H1 (cell line): ENCODE measurements at regions of chr1 and their contacts with region 1.

Region 1: DNA sequence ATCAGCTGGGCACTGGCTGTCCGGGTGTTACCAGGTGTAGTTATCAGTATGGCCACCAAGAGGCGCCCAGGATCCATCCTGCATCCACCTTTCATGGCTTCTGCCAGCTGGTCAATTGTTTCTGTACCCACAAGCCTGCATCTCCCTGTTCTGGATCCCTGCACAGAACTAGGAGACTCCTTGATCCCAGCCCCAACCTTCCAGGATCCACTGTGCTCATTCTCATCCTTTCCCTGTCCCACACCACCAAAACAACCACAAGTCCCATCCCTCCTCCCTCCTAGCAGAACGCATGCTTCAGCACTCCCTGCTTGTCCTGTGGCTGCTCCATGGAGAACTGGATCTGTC is 27.2 kb upstream of the FOXE3 start:
- DNase-seq: peak; percentile 46 to 89
- H3K4me3 ChIP-seq: no peak overlapping the region
- H3K27ac ChIP-seq: no peak overlapping the region
- H3K4me1 ChIP-seq: no peaks in the 10 kb centered on the region
- H3K27me3 ChIP-seq: peaks cover 0 to 2% (median 0%) of the 10 kb centered on the region in 4 experiments; a peak in 2 of 7 replicates
- CTCF ChIP-seq: peak; percentile 80 to 93 (median 89)
- EP300 ChIP-seq: no peak
- POLR2A ChIP-seq: no peak
- RAD21 ChIP-seq: peak; percentile 92 to 94

Region 2: DNA sequence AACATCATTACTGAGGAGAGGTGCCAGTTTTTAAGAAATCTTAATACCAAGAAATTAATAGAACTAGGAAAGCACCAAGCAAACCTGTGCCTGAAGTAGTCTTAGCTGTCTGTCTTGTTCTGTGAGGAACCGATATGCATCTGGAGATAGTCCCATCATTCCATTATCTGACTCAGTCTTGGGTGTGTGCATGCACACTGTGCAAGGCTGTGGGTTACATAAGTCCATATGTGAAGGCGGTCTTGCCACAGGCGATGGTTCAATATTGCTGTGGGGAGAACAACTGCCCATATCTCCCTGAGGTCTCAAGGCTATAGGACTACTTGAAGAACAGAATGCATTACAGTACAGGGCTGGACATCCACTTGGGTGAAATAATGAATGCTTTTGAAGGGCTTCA is 108.7 kb before region 1 on chr1:
- CTCF ChIA-PET with region 1: no interaction called
- POLR2A ChIA-PET with region 1: no interaction called
- DNase-seq: no peak
- H3K4me3 ChIP-seq: no peak overlapping the region
- H3K27ac ChIP-seq: no peak overlapping the region
- H3K4me1 ChIP-seq: no peaks in the 10 kb centered on the region
- H3K27me3 ChIP-seq: no peaks in the 10 kb centered on the region
- CTCF ChIP-seq: no peak
- EP300 ChIP-seq: no peak
- POLR2A ChIP-seq: no peak
- RAD21 ChIP-seq: no peak

Region 3: GRCh38 chr1:47378147-47378546 is 10.7 kb before region 1 on chr1:
- CTCF ChIA-PET with region 1: interaction called, 15 read pairs
- POLR2A ChIA-PET with region 1: no interaction called
- DNase-seq: no peak
- H3K4me3 ChIP-seq: no peak overlapping the region
- H3K27ac ChIP-seq: no peak overlapping the region
- H3K4me1 ChIP-seq: peaks cover 0 to 3% (median under 1%) of the 10 kb centered on the region in 4 experiments; a peak in 1 of 7 replicates
- H3K27me3 ChIP-seq: no peaks in the 10 kb centered on the region
- CTCF ChIP-seq: no peak
- EP300 ChIP-seq: no peak
- POLR2A ChIP-seq: no peak
- RAD21 ChIP-seq: no peak

Region 4: DNA sequence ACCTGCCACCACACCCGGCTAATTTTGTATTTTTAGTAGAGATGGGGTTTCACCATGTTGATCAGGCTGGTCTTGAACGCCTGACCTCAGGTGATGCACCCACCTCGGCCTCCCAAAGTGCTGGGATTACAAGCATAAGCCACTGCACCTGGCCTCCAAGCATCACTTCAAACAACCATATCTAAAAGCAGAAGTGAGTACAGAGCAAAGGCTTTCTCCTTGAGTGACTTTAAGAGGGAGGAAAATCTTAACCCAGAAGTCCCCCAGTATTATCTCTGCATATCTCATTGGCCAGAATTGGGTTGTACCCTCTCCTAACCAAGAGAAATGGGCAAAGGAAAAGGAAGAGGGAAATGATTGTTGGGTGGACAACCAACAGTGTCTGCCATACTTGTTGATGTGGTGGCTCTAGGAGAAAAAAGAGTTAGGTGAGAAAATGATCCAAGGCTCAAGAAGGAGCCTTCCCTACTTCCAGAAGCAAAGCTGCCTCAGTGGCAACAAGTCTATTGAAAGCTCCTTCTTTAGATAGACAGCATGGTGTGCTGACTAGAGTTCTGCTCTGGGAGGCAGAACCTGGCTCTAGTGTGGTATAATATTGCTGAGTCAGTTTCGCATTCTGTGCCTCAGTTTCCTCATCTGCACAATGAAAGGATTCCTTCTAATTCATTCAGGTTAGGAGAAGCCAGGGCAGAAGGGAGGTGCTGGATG is 10.4 kb after region 1 on chr1:
- CTCF ChIA-PET with region 1: interaction called, 46 read pairs
- POLR2A ChIA-PET with region 1: no interaction called
- DNase-seq: no peak
- H3K4me3 ChIP-seq: no peak overlapping the region
- H3K27ac ChIP-seq: no peak overlapping the region
- H3K4me1 ChIP-seq: no peaks in the 10 kb centered on the region
- H3K27me3 ChIP-seq: peaks cover 0 to 4% (median 0%) of the 10 kb centered on the region in 4 experiments; a peak in 3 of 7 replicates
- CTCF ChIP-seq: no peak
- EP300 ChIP-seq: no peak
- POLR2A ChIP-seq: no peak
- RAD21 ChIP-seq: no peak

Region 5: DNA sequence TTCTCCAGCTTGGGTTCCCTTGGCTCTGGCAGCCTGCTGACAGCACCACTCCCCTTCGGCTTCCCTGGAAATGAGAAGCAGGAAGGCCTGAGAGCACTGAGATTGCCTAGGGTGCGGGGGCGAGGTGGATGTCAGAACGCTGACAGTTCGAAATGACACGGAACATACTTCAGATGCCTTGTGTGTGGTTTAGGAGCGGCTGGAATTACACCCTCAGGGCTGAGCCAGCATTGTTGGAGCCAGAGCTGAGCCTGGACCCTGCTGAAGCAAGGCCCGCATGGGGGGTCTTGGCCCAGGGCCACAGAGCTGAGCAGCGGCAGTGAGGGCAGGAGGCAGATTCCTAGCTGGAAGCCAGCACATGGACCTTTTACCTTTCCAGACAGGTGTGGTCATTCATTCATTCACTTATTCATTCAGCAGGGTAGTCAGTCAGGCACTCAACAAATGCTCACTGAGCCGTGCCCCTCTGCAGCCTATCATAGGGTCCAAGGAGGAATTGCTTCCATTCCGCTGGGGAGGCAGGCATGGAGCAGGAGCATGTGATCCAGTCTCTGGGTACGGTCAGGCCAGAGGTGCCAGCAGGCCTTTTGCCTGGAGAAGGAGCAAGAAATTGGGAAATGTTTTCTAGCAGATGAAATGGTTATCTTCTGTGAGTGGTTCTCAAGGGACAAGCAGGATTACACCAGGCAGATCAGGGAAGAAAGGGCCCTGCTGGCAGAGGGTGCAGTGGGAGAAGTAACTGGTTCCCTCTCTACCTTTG is 20.6 kb after region 1 on chr1:
- CTCF ChIA-PET with region 1: interaction called, 41 read pairs
- POLR2A ChIA-PET with region 1: no interaction called
- DNase-seq: no peak
- H3K4me3 ChIP-seq: no peak overlapping the region
- H3K27ac ChIP-seq: no peak overlapping the region
- H3K4me1 ChIP-seq: no peaks in the 10 kb centered on the region; a peak in 1 of 7 replicates
- H3K27me3 ChIP-seq: peaks cover 0 to 16% (median 12%) of the 10 kb centered on the region in 4 experiments; a peak in 6 of 7 replicates
- CTCF ChIP-seq: no peak
- EP300 ChIP-seq: no peak
- POLR2A ChIP-seq: no peak
- RAD21 ChIP-seq: no peak

Region 6: DNA sequence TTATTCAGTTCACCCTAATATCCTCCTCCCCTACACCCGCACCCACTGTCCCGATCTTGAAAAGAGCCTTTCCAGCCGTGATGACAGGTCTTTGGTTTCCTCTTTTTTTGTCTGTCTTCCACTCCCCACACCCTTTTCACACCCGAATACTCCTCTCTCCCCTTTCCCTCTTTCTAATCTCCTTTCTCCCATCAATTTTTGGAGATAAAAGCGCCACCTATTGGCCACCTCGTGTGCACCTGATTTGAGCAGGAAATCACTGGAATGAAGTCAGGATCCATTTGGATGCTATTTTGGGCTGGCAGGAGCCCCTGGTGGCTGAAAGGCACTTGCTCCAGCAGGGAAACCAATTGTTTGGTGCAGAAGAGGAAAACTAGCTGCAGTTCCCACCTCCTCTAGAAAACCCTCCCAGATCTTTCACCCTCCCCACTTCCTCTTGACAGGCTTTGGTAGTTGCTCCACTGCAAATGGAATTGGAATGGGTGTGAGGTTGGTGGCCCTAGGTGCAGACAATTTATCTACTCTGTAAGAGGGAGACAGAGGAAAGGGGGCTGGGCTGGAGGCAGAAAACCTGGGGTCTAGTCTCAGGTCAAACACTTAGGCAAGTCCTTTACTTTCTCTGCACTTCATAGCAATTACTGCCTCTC is 35.6 kb after region 1 on chr1:
- CTCF ChIA-PET with region 1: interaction called, 139 read pairs
- POLR2A ChIA-PET with region 1: no interaction called
- DNase-seq: peak in 1 of 2 experiments; percentile 69
- H3K4me3 ChIP-seq: no peak overlapping the region
- H3K27ac ChIP-seq: no peak overlapping the region
- H3K4me1 ChIP-seq: peaks cover 0 to 3% (median 2%) of the 10 kb centered on the region in 4 experiments; a peak in 2 of 7 replicates
- H3K27me3 ChIP-seq: peaks cover 11 to 53% (median 39%) of the 10 kb centered on the region in 4 experiments
- CTCF ChIP-seq: peak; percentile 72 to 98 (median 95)
- EP300 ChIP-seq: no peak
- POLR2A ChIP-seq: no peak
- RAD21 ChIP-seq: peak; percentile 62 to 71

Region 7: DNA sequence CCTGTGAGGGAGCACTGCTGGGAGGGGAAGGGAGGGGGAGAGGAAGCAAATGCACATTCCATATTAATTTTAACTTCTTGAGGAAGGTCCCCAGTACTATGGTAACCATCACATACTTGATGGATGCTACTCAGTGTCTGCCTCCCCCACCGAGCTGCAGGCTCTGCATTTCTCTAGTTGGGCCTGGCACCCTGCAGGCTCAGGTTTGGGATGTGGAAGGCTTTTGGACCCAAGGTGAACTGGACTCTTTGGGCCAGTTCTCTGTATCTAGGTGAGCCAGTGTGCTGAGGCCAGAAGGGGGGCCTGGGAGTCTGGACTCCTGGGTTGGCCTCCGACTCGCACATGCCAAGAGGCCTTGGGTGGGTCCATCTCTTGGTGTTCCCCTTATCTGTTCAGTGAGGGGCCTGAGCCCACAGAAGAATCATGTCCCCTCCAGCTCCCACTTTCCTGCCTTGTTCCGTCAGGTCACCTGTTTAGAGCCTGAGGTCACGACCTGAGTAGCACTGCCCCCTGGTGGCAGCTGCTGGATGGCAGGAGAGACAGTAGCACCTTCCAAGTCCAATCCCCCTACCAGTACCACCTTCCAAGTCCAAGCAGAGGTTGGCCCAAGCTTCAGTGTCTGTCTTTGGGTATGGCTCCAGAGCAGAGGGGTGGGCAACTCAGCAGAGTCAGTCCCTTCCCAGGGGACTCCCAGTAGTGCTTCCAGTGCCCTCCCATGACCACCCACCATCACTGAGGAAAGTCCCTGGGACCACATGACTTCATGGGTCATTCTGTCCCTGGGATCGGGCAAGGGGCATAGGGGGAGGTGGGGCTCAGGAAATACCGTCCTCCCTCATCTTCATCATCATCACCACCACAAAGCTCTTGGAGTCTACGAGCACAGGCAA is 366.5 kb after region 1 on chr1:
- CTCF ChIA-PET with region 1: interaction called, 10 read pairs
- POLR2A ChIA-PET with region 1: no interaction called
- DNase-seq: peak; percentile 41 to 93
- H3K4me3 ChIP-seq: no peak overlapping the region
- H3K27ac ChIP-seq: no peak overlapping the region
- H3K4me1 ChIP-seq: no peaks in the 10 kb centered on the region; a peak in 1 of 7 replicates
- H3K27me3 ChIP-seq: peaks cover 0 to 2% (median 0%) of the 10 kb centered on the region in 4 experiments; a peak in 1 of 7 replicates
- CTCF ChIP-seq: peak; percentile 75 to 97 (median 95)
- EP300 ChIP-seq: no peak
- POLR2A ChIP-seq: no peak
- RAD21 ChIP-seq: peak; percentile 51 to 64